ENCODE measurements at regions of chr3 and their contacts with region 1.

Region 1: GRCh38 chr3:116770815-116771450 is 61.4 kb downstream of the TUSC7 start:
- DNase-seq: peak; percentile 77
- H3K4me3 Mint-ChIP-seq: no peak overlapping the region
- H3K27ac Mint-ChIP-seq: no peak overlapping the region
- H3K4me1 Mint-ChIP-seq: no peaks in the 10 kb centered on the region
- H3K27me3 Mint-ChIP-seq: peaks cover 90% of the 10 kb centered on the region
- CTCF ChIP-seq: peak; percentile 87

Region 2: GRCh38 chr3:116569611-116570010 is 201.3 kb before region 1 on chr3:
- CTCF ChIA-PET with region 1: no interaction called
- POLR2A ChIA-PET with region 1: no interaction called
- intact Hi-C with region 1: no loop called
- DNase-seq: no peak
- H3K4me3 Mint-ChIP-seq: no peak overlapping the region
- H3K27ac Mint-ChIP-seq: no peak overlapping the region
- H3K4me1 Mint-ChIP-seq: no peaks in the 10 kb centered on the region
- H3K27me3 Mint-ChIP-seq: no peaks in the 10 kb centered on the region
- CTCF ChIP-seq: no peak

Region 3: DNA sequence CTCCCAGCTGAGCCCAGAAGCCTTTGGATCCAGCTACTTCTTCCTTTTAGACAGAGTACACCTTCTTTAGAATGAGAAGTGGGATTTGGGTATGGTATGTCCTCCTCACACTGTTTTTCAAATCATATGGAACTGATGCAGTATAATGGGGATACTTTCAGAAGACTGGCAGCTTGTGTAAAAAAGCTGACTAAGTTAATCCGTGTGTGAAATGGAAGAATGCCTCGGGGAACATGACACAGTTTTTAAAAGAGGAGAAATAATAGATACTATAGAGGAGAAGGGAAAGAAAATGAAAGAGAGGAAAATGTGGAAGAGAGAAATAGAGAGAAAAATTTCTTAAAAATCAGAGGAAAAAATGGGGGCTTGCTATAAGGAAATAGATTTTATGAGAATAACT is 13.6 kb before region 1 on chr3:
- CTCF ChIA-PET with region 1: interaction called, 14 read pairs
- POLR2A ChIA-PET with region 1: no interaction called
- intact Hi-C with region 1: no loop called
- DNase-seq: no peak
- H3K4me3 Mint-ChIP-seq: no peak overlapping the region
- H3K27ac Mint-ChIP-seq: no peak overlapping the region
- H3K4me1 Mint-ChIP-seq: no peaks in the 10 kb centered on the region
- H3K27me3 Mint-ChIP-seq: peaks cover 84% of the 10 kb centered on the region
- CTCF ChIP-seq: no peak

Region 4: GRCh38 chr3:116785226-116785625 is 14.3 kb after region 1 on chr3:
- CTCF ChIA-PET with region 1: interaction called, 13 read pairs
- POLR2A ChIA-PET with region 1: no interaction called
- intact Hi-C with region 1: no loop called
- DNase-seq: no peak
- H3K4me3 Mint-ChIP-seq: no peak overlapping the region
- H3K27ac Mint-ChIP-seq: no peak overlapping the region
- H3K4me1 Mint-ChIP-seq: no peaks in the 10 kb centered on the region
- H3K27me3 Mint-ChIP-seq: peaks cover 82% of the 10 kb centered on the region
- CTCF ChIP-seq: no peak

Region 5: GRCh38 chr3:116863822-116864589 is 93.1 kb after region 1 on chr3:
- CTCF ChIA-PET with region 1: interaction called, 4 read pairs
- POLR2A ChIA-PET with region 1: no interaction called
- intact Hi-C with region 1: loop called (anchors 5 kb)
- DNase-seq: peak; percentile 51
- H3K4me3 Mint-ChIP-seq: no peak overlapping the region
- H3K27ac Mint-ChIP-seq: no peak overlapping the region
- H3K4me1 Mint-ChIP-seq: no peaks in the 10 kb centered on the region
- H3K27me3 Mint-ChIP-seq: no peaks in the 10 kb centered on the region
- CTCF ChIP-seq: peak; percentile 46

Region 6: GRCh38 chr3:117019082-117019713 is 248.3 kb after region 1 on chr3:
- CTCF ChIA-PET with region 1: interaction called, 5 read pairs
- POLR2A ChIA-PET with region 1: no interaction called
- intact Hi-C with region 1: loop called (anchors 10 kb)
- DNase-seq: peak; percentile 60
- H3K4me3 Mint-ChIP-seq: no peak overlapping the region
- H3K27ac Mint-ChIP-seq: no peak overlapping the region
- H3K4me1 Mint-ChIP-seq: no peaks in the 10 kb centered on the region
- H3K27me3 Mint-ChIP-seq: peaks cover 83% of the 10 kb centered on the region
- CTCF ChIP-seq: peak; percentile 74

Measured in MCF 10A (cell line).